Transverse colon (tissue), 4 donors: ENCODE measurements at regions of chr6 and their contacts with region 1.

Region 1: DNA sequence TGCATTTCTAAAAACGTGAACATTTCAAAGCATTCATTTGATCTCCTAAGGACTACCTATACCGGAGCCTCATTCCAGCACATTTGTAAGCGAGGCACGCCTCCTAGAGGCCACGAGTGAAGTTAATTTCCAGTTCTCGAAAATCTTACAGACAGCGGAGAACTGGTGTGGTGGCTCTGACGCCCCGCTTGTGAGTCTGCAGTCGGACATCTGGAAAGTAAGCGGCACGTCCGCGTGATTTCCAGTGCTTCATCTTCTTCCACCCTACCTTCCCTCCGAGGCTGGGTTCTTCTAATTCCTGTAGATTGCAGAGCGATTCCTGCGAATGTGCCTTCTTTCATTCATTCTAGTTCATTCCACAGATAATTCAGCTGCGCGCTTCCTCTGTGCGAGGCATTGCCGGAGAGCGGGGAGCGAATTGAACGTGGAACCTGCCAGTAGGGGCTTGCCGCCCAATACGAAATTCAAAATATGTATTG is 810 bp upstream of the PRIM2 start:
- DNase-seq: peak; percentile 87
- H3K4me3 ChIP-seq: peak overlapping the region; percentile 19 to 57 (median 54)
- H3K27ac ChIP-seq: peak overlapping the region; percentile 76 to 87 (median 86)
- H3K4me1 ChIP-seq: peaks cover 24 to 40% (median 29%) of the 10 kb centered on the region in 4 donors
- H3K27me3 ChIP-seq: no peaks in the 10 kb centered on the region
- CTCF ChIP-seq: peak; percentile 60 to 86 (median 75)
- EP300 ChIP-seq: no peak
- POLR2A ChIP-seq: no peak

Region 2: GRCh38 chr6:56637640-56638039 is 679.0 kb before region 1 on chr6:
- in situ Hi-C with region 1: loop called in 1 of 4 experiments (anchors 25 kb)
- intact Hi-C with region 1: no loop called
- DNase-seq: no peak
- H3K4me3 ChIP-seq: no peak overlapping the region
- H3K27ac ChIP-seq: peak overlapping the region in 2 of 4 donors; percentile 8 to 48
- H3K4me1 ChIP-seq: peaks cover 0 to 5% (median under 1%) of the 10 kb centered on the region in 4 donors
- H3K27me3 ChIP-seq: no peaks in the 10 kb centered on the region
- CTCF ChIP-seq: peak; percentile 58 to 75 (median 64)
- EP300 ChIP-seq: no peak
- POLR2A ChIP-seq: no peak

Region 3: GRCh38 chr6:56875961-56876360 is 440.7 kb before region 1 on chr6:
- in situ Hi-C with region 1: no loop called
- intact Hi-C with region 1: no loop called
- DNase-seq: peak; percentile 57
- H3K4me3 ChIP-seq: peak overlapping the region in 1 of 4 donors; percentile 4
- H3K27ac ChIP-seq: peak overlapping the region in 3 of 4 donors; percentile 28 to 39 (median 30)
- H3K4me1 ChIP-seq: peaks cover 0 to 3% (median 0%) of the 10 kb centered on the region in 4 donors
- H3K27me3 ChIP-seq: no peaks in the 10 kb centered on the region
- CTCF ChIP-seq: no peak
- EP300 ChIP-seq: no peak
- POLR2A ChIP-seq: peak; percentile 39

Region 4: DNA sequence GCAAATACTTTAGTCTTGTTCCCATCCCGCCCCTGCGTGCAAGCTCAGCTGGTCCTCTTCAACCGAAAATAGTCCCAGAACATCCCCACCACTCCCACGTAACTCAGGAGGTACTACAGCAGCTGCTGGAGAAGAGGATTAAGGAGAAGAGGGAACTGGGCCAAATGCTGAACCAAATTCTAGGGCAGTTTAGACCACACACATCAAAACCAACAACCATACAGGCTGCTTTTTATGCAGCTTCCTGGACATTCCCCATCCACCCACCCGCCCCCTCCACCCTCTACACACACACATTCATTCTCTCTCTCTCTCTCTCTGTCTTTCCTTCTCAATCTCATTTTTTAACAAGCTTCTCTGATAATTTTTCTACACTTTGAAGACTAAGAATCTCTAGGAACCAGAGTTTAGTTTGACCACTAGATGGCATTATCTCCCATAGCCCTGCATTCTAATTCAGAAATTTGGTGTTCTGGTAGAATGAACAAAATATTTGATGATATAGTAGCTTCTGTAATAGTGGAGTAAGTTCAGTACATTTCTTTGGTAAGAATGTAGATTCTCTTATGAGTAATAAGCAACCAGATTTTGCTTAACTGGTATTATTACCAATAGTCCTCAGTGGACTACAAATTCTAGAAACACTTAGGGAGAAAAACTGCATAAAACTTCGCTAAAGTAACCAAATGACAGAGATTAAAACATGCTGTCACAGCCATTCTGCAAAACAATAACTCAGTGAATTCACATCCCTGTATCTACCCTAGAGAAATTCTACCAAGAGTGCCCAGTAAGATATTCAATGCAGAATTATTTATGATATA is 413.8 kb before region 1 on chr6:
- in situ Hi-C with region 1: loop called (anchors 5 to 25 kb)
- intact Hi-C with region 1: loop called (anchors 5 kb)
- DNase-seq: no peak
- H3K4me3 ChIP-seq: no peak overlapping the region
- H3K27ac ChIP-seq: peak overlapping the region in 3 of 4 donors; percentile 11 to 31 (median 30)
- H3K4me1 ChIP-seq: peaks cover 5 to 38% (median 12%) of the 10 kb centered on the region in 4 donors
- H3K27me3 ChIP-seq: no peaks in the 10 kb centered on the region
- CTCF ChIP-seq: peak; percentile 49 to 75 (median 67)
- EP300 ChIP-seq: no peak
- POLR2A ChIP-seq: no peak

Region 5: DNA sequence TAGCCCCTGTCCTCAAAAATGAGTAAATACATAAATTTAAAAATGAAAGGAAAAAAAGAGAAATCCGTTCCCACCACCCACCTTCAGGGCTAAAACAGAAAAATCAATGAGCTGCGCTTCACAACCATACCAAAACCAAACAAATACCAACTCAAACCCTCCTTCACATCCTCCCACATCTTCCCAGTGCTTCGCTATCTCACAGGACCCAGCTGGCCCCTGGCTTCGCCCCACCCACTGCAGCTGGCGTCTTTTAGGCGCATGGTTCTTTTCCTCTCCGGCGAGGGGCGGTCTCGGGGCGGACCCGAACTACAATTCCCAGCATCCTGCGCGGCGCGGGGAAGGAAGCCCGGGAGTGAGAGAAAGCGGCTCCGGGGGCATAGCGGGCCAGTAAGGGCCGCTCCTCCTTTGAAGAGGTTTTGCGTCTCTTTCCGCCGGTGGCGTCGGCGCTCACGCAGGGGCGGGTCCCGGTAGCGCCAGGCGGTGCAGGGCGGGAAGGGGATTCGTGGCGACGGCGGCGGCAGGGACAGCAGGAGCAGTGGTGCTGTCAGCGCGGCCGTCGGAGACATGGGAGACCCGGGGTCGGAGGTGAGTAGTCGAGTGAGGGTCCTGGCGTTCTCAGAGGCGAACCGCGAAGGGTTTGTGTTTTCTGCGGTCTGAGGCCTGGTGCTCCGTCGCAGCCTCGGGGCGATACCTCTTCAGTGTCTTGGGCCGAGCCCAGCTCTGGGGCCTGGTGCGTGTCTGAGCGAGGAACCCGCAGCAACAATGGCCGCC is 226.7 kb before region 1 on chr6 and contains the start of gene ZNF451:
- in situ Hi-C with region 1: loop called in 2 of 4 experiments (anchors 25 kb)
- intact Hi-C with region 1: no loop called
- DNase-seq: peak; percentile 99
- H3K4me3 ChIP-seq: peak within 1 kb of the TSS; percentile 34 to 64 (median 56)
- H3K27ac ChIP-seq: peak within 1 kb of the TSS; percentile 85 to 92 (median 90)
- H3K4me1 ChIP-seq: peaks cover 14 to 43% (median 24%) of the 10 kb centered on the region in 4 donors
- H3K27me3 ChIP-seq: no peaks in the 10 kb centered on the region
- CTCF ChIP-seq: peak in 1 of 5 experiments; percentile 9
- EP300 ChIP-seq: no peak
- POLR2A ChIP-seq: peak; percentile 92
- total RNA-seq, gene ZNF451: 43.7 to 67.5 (median 52.4) TPM

Region 6: DNA sequence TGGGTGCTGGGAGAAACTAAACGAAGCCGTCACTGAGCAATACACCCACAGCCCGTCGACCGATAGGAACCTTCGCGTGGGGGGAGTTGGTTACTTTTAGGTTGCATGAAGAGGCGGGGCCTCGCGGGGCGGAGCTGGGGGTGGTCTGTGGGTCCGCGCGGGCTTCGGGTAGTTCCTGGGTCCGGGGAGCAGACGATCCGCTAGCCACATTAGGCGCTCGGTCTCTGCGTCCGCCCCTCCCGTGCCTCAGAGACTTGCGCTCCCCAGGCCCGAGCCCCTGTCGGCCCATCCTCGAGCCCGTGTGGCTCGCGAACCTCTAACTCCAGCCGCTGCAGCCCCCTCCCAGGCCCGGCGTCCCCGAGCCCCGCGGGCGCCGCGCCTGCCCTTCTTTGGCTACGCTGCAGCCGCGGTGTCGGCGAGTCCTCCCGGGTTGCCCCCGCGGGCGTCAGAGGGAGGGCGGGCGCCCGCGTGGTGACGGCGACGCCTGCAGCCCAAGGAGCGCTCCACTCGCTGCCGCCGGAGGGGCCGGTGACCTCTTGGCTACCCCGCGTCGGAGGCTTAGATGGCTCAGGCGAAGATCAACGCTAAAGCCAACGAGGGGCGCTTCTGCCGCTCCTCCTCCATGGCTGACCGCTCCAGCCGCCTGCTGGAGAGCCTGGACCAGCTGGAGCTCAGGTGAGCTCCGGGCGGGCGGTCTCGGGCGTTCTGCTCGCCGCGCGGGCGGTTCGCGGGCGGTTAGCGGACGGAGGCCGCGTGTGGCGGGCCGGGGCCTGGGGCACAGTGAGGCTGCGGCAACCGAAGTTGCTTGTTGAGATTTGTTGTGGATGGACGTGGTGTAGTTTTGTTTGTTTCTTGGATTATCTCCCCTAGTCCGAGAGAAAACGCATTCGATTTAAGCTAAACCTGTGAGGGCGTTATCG is 144.2 kb before region 1 on chr6 and contains the start of gene BAG2:
- in situ Hi-C with region 1: loop called in 2 of 4 experiments (anchors 25 kb)
- intact Hi-C with region 1: loop called (anchors 5 kb)
- DNase-seq: peak; percentile 88
- H3K4me3 ChIP-seq: peak within 1 kb of the TSS; percentile 59 to 89 (median 67)
- H3K27ac ChIP-seq: peak within 1 kb of the TSS; percentile 90 to 94 (median 93)
- H3K4me1 ChIP-seq: peaks cover 0 to 30% (median 3%) of the 10 kb centered on the region in 4 donors
- H3K27me3 ChIP-seq: no peaks in the 10 kb centered on the region
- CTCF ChIP-seq: peak; percentile 15 to 42 (median 28)
- EP300 ChIP-seq: no peak
- POLR2A ChIP-seq: peak; percentile 70
- total RNA-seq, gene BAG2: 7.1 to 49.0 (median 10.7) TPM

Region 7: GRCh38 chr6:57190140-57190539 is 126.5 kb before region 1 on chr6:
- in situ Hi-C with region 1: loop called in 2 of 4 experiments (anchors 25 kb)
- intact Hi-C with region 1: no loop called
- DNase-seq: no peak
- H3K4me3 ChIP-seq: no peak overlapping the region
- H3K27ac ChIP-seq: peak overlapping the region in 3 of 4 donors; percentile 14 to 32 (median 25)
- H3K4me1 ChIP-seq: peaks cover 0 to 5% (median 2%) of the 10 kb centered on the region in 4 donors
- H3K27me3 ChIP-seq: no peaks in the 10 kb centered on the region
- CTCF ChIP-seq: peak; percentile 16 to 37 (median 27)
- EP300 ChIP-seq: no peak
- POLR2A ChIP-seq: no peak

Region 8: GRCh38 chr6:57262901-57263694 is 53.5 kb before region 1 on chr6:
- in situ Hi-C with region 1: no loop called
- intact Hi-C with region 1: loop called (anchors 5 kb)
- DNase-seq: no peak
- H3K4me3 ChIP-seq: no peak overlapping the region
- H3K27ac ChIP-seq: peak overlapping the region; percentile 80 to 88 (median 86)
- H3K4me1 ChIP-seq: peaks cover 9 to 28% (median 13%) of the 10 kb centered on the region in 4 donors
- H3K27me3 ChIP-seq: no peaks in the 10 kb centered on the region
- CTCF ChIP-seq: no peak
- EP300 ChIP-seq: peak; percentile 31
- POLR2A ChIP-seq: no peak